ENCODE measurements at regions of chr15 and their contacts with region 1.

Region 1: DNA sequence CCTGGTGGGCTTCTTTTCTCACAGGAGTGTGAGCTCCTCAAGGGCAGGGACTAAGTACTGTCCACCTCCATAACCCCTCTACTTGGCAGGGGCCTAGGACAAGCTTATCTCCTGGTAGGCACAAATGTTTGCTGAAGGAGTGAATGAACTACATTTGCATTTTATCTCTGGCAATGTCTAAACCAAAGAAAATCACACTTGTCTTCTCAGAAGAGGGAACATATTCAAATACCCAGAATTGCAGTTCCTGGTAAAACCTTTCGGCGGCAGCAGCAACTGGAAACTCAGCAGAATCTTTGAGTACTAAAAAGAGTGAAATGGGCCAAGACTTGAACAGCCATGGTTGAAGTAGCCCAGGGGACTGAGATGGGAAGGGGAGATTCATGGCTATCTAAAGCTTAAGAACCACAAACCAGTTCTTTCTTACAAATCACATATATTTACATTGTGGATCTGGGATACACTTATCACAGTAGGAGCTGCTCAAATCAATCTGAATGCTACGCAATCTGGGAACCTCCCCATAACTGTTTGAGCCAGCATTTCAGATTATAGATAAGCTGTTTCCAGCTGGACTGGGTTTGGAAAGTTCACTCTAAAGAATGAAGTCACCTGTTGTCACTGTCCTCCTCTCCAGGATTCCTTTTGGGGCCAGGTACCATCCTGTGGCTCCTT is 18.7 kb upstream of the PTPN9 start:
- DNase-seq: peak; percentile 84
- ATAC-seq: peak; percentile 83
- H3K4me3 Mint-ChIP-seq: peak overlapping the region; percentile 46
- H3K27ac Mint-ChIP-seq: peak overlapping the region; percentile 92
- H3K4me1 Mint-ChIP-seq: peaks cover 41% of the 10 kb centered on the region
- H3K27me3 Mint-ChIP-seq: no peaks in the 10 kb centered on the region

Region 2: DNA sequence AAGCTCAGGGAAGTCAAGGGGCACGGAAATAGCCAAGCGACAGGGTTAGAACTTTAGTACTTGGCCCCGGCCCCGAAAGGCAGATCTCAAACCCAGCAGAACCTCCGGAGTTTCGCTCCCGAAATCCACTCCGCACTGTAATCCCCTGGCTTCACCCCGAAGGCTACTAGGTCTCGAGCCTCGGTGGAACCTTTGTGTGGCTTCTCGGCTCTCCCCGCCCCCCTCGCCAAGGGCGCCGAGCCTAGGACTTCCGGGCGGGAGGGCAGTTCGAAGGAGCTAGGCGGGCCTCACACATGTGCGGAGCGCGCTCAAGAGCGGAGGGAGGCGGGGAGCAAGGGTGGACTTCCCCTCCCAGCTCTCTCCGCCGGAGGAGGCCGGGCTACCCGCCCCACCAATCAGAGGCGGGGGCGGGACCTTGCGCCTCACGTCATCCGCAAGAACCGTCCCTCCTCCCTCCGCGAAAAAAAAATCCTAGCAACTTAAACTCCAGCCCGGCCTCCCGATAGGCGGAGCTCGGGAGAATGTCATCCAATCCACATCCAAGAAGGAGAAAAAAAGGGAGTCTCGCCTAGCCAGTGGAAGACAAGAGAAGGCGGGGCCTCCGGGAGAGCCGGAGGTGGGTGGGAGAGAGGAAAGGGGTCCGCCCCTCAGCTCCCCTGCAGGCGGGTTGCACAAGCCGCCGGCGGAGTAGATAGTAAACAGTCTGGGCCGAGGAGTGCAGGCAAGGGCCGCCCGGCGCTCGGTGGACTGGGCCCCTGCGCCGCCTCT is 143.9 kb before region 1 on chr15:
- CTCF ChIA-PET with region 1: interaction called, 10 read pairs
- DNase-seq: peak; percentile 99
- ATAC-seq: peak; percentile 50
- H3K4me3 Mint-ChIP-seq: peak overlapping the region; percentile 98
- H3K27ac Mint-ChIP-seq: peak overlapping the region; percentile 98
- H3K4me1 Mint-ChIP-seq: peaks cover 28% of the 10 kb centered on the region
- H3K27me3 Mint-ChIP-seq: no peaks in the 10 kb centered on the region

Region 3: GRCh38 chr15:75502360-75502759 is 95.4 kb before region 1 on chr15:
- CTCF ChIA-PET with region 1: no interaction called
- DNase-seq: no peak
- ATAC-seq: no peak
- H3K4me3 Mint-ChIP-seq: no peak overlapping the region
- H3K27ac Mint-ChIP-seq: no peak overlapping the region
- H3K4me1 Mint-ChIP-seq: no peaks in the 10 kb centered on the region
- H3K27me3 Mint-ChIP-seq: no peaks in the 10 kb centered on the region

Region 4: GRCh38 chr15:75542386-75542797 is 55.4 kb before region 1 on chr15:
- CTCF ChIA-PET with region 1: no interaction called
- DNase-seq: no peak
- ATAC-seq: no peak
- H3K4me3 Mint-ChIP-seq: no peak overlapping the region
- H3K27ac Mint-ChIP-seq: no peak overlapping the region
- H3K4me1 Mint-ChIP-seq: peaks cover 13% of the 10 kb centered on the region
- H3K27me3 Mint-ChIP-seq: no peaks in the 10 kb centered on the region

Region 5: GRCh38 chr15:75578948-75579920 is 18.6 kb before region 1 on chr15 and contains the start of gene PTPN9:
- CTCF ChIA-PET with region 1: interaction called, 37 read pairs
- DNase-seq: peak; percentile 84
- ATAC-seq: peak; percentile 87
- H3K4me3 Mint-ChIP-seq: peak within 1 kb of the TSS; percentile 85
- H3K27ac Mint-ChIP-seq: peak within 1 kb of the TSS; percentile 91
- H3K4me1 Mint-ChIP-seq: peaks cover 26% of the 10 kb centered on the region
- H3K27me3 Mint-ChIP-seq: no peaks in the 10 kb centered on the region
- total RNA-seq, gene PTPN9: 34.0 to 41.9 TPM